Activated T-helper 1 cell treated with anti-CD3 and anti-CD28 coated beads, Interleukin-12 subunit alpha, Interleukin-12 subunit beta, Interleukin-2, Interleukin-4 antibody, amounts not matched to agents 30 ng/mL and 10 ng/mL and 1 ng/mL, durations not matched to agents 14 hours and 24 hours and 36 hours (primary cell): ENCODE measurements at regions of chr7 and their contacts with region 1.

Region 1: GRCh38 chr7:1137510-1138167 is 22.4 kb downstream of the ZFAND2A start:
- DNase-seq: no peak
- H3K4me3 Mint-ChIP-seq: peak overlapping the region; percentile 89
- H3K27ac Mint-ChIP-seq: peak overlapping the region; percentile 81
- H3K4me1 Mint-ChIP-seq: peaks cover 10% of the 10 kb centered on the region
- H3K27me3 Mint-ChIP-seq: no peaks in the 10 kb centered on the region

Region 2: DNA sequence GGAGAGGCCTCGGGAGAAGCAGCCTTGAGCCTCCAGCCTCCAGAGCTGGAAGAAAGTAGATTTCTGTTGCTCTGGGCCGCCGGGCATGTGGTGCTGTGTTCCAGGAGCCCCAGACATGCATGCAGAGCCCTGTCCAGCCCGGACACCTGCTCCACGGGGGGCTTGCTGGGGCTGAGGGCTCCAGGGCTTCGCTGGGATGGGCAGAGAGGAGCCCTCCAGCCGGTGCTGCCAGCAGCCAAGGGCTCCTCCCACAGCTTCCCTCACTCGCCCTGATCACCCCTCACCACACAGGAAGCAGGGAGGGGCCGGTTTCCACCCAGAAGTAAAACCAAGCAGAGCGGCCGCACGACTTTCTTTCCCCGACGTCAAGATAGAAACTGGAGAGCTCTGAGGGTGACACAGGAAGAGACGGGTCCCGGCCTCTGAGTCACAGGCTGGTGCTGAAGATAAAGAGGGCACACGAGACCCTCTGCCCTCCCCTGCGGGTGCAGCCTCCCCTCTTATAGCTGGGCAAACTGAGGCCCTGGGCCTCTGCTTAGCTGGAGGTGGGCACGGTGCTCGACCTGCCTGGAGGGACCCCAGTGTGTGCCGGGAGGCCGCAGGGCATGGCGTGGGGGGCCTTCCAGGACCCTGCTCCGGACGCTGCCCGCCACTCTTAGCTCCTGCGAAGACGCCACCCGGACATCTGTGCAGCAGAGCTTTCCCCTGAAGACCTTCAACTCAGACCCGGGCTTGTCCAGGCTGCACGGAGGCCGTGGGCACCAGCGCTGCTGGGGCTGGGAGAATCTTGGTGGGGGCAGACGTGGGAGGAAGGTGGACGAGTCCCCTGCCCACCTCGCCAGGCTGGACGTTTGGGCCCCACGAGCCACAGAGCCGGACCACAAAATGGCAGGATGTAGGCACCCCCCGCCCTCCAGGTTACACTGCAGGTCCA is 214.3 kb before region 1 on chr7:
- intact Hi-C with region 1: loop called (anchors 1 kb)
- DNase-seq: peak; percentile 89
- H3K4me3 Mint-ChIP-seq: peak overlapping the region; percentile 81
- H3K27ac Mint-ChIP-seq: peak overlapping the region; percentile 94
- H3K4me1 Mint-ChIP-seq: peaks cover 20% of the 10 kb centered on the region
- H3K27me3 Mint-ChIP-seq: peaks cover 4% of the 10 kb centered on the region

Region 3: DNA sequence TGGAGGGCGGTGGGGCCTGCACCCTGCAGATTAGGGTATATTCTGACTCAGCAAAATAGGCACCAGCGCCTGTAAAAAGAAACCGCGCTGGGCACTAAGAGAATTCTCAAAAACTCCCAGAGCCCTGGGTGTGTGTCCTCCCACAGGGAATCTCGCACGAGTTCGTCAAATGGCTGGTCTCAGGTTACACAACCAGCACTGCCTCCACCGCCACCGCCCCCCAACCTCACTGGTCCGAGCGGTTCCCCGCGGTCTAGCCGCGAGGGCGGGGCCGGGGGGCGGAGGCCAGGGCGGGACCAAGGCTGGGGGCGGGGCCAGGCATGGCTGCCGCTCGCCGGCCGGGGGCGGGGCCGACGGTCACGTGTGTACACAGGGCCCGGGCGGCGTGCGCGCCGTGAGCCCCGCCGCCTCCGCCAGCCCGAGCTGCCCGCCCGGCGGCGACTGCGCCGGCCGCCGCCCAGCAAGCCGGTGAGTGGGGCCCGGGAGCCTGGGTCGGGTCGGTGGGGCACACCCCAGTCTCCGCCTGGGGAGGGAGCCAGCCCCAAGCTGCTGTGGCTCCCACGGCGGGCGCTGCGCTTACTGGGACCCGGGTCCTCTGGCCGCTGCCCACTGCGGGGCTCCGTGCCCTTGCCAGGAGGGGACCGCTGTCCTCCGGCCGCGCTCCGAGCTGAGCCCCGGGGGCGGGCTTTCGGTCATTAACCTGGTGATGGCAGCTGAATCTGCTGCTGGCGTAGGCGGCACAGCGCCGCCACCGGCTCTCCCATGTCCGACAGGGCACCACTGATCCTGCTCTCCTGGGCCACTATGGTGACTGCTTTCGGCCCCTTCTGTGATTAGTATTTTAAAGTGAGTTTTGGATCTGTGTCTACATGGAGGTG is 93.2 kb before region 1 on chr7 and contains the start of gene GPR146:
- intact Hi-C with region 1: loop called (anchors 1 kb)
- DNase-seq: peak; percentile 85
- H3K4me3 Mint-ChIP-seq: peak within 1 kb of the TSS; percentile 83
- H3K27ac Mint-ChIP-seq: peak within 1 kb of the TSS; percentile 48
- H3K4me1 Mint-ChIP-seq: peaks cover 66% of the 10 kb centered on the region
- H3K27me3 Mint-ChIP-seq: peaks cover 1% of the 10 kb centered on the region
- total RNA-seq, gene GPR146: 2.2 and 2.8 TPM in 2 replicates

Region 4: GRCh38 chr7:1096156-1097119 is 41.2 kb before region 1 on chr7:
- intact Hi-C with region 1: no loop called
- DNase-seq: no peak
- H3K4me3 Mint-ChIP-seq: no peak overlapping the region
- H3K27ac Mint-ChIP-seq: no peak overlapping the region
- H3K4me1 Mint-ChIP-seq: no peaks in the 10 kb centered on the region
- H3K27me3 Mint-ChIP-seq: no peaks in the 10 kb centered on the region

Region 5: GRCh38 chr7:1159891-1160668 is 22.4 kb after region 1 on chr7 and contains the start of gene ZFAND2A:
- intact Hi-C with region 1: loop called (anchors 1 kb)
- DNase-seq: peak; percentile 99
- H3K4me3 Mint-ChIP-seq: peak within 1 kb of the TSS; percentile 93
- H3K27ac Mint-ChIP-seq: peak within 1 kb of the TSS; percentile 80
- H3K4me1 Mint-ChIP-seq: peaks cover 28% of the 10 kb centered on the region
- H3K27me3 Mint-ChIP-seq: no peaks in the 10 kb centered on the region
- total RNA-seq, gene ZFAND2A: 21.2 and 21.9 TPM in 2 replicates

Region 6: DNA sequence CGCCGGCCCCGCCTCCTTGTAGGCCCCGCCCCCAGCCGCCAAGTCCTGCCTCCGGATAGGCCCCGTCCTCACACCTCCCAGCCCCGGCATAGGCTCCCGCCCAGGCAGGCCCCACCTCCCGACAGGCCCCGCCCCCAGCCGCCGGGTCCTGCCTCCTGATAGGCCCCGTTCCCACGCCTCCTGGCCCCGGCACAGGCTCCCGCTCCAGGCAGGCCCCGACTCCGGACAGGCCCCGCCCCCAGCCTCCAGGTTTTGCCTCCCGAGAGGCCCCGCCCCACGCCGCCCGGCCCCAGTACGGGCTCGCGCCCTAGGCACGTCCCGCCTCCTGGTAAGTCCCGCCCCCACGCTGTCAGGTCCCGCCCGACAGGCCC is 321.9 kb after region 1 on chr7:
- intact Hi-C with region 1: loop called (anchors 1 kb)
- DNase-seq: peak; percentile 96
- H3K4me3 Mint-ChIP-seq: peak overlapping the region; percentile 72
- H3K27ac Mint-ChIP-seq: no peak overlapping the region
- H3K4me1 Mint-ChIP-seq: no peaks in the 10 kb centered on the region
- H3K27me3 Mint-ChIP-seq: peaks cover 4% of the 10 kb centered on the region